ENCODE measurements at regions of chr17 and their contacts with region 1.

Region 1: DNA sequence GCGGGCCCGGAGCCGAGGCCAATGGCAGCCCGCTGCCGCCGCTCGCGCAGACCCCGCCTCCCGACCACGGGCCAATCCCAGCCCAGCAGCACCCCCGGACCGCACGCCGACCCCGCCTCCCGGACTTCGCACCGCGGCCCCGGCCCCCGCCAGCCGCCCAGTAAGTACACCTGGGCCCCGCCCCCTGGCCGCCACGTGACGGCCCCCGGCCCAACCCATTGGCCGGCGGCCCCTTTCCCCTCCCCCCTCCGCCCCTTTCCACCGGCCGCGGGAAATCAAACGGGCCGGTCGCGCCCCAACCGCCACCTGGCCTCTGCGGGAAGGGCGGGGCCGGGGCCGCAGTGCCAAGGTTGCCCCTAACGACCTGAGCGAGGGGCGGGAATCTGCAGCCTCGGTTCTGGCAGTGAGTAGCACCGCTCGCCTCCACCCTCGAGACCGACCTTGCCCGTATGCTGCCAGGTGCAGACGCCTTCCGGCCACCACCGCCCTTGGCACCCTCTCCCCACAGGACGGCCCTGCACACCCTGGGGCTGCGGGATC is at the start of gene YBX2:
- DNase-seq: peak; percentile 95
- ATAC-seq: peak; percentile 81
- total RNA-seq, gene YBX2: 19.7 to 23.6 TPM

Region 2: GRCh38 chr17:7280519-7281429 is 13.9 kb before region 1 on chr17:
- intact Hi-C with region 1: loop called in 1 of 2 experiments (anchors 2 kb)
- DNase-seq: peak; percentile 78 to 89
- ATAC-seq: peak; percentile 73

Measured in left colon (tissue), 2 donors.